WTC11 (cell line): ENCODE measurements at regions of chr20 and their contacts with region 1.

Region 1: GRCh38 chr20:35454881-35455609 is at the start of gene CEP250:
- DNase-seq: peak; percentile 97
- ATAC-seq: peak; percentile 92
- H3K4me3 Mint-ChIP-seq: peak within 1 kb of the TSS; percentile 90
- H3K27ac Mint-ChIP-seq: peak within 1 kb of the TSS; percentile 99
- H3K4me1 Mint-ChIP-seq: peaks cover 32% of the 10 kb centered on the region
- H3K27me3 Mint-ChIP-seq: no peaks in the 10 kb centered on the region
- CTCF ChIP-seq: no peak
- total RNA-seq, gene CEP250: 63.1 to 66.9 TPM (median 65.8 TPM) in 3 replicates

Region 2: DNA sequence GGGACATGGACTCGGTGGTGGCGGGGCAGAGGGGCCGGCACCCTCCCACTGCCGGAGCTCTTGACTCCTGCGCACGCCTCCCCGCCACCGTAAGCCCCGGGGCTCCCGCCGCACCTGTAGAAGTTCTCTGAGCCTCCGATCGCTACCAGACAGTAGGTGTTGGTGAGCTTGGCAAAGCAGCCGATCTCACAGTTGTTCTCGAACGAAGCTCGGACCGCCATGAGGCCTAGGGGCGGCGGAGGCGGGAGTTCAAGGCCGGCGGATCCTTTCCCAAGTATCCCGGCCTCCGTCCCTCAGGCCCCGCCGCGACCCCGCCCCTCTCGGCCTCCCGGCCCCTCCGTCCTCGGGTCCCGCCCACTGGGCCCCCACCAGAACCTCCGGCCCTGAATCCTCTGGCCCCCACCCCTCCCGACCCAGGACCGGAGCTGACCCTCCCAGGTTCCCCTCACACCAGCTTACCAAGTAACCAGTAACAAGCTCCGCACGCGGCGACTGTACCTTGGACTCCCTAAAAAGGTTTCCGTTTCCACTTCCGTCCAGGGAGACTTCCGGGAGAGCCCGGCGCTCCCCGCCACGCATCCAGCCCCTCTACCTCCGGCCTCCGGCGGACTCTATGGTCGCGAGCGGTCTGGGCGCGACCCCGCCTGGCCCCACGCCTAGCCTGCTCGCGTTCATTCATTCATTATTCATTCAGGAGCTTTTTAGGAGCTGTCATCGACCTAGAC is 170.6 kb before region 1 on chr20 and contains the start of gene EIF6:
- CTCF ChIA-PET with region 1: no interaction called
- POLR2A ChIA-PET with region 1: interaction called, 12 read pairs
- DNase-seq: peak; percentile 89
- ATAC-seq: peak; percentile 91
- H3K4me3 Mint-ChIP-seq: peak within 1 kb of the TSS; percentile 94
- H3K27ac Mint-ChIP-seq: peak within 1 kb of the TSS; percentile 84
- H3K4me1 Mint-ChIP-seq: peaks cover 18% of the 10 kb centered on the region
- H3K27me3 Mint-ChIP-seq: no peaks in the 10 kb centered on the region; the same call in 1 of the 2 replicates
- CTCF ChIP-seq: no peak
- total RNA-seq, gene EIF6: 130 to 157 TPM (median 133 TPM) in 3 replicates

Region 3: GRCh38 chr20:35541783-35542588 is 86.9 kb after region 1 on chr20 and contains the start of gene ERGIC3:
- CTCF ChIA-PET with region 1: interaction called, 11 read pairs
- POLR2A ChIA-PET with region 1: interaction called, 10 read pairs
- DNase-seq: peak; percentile 100
- ATAC-seq: peak; percentile 85
- H3K4me3 Mint-ChIP-seq: peak within 1 kb of the TSS; percentile 83
- H3K27ac Mint-ChIP-seq: peak within 1 kb of the TSS; percentile 88
- H3K4me1 Mint-ChIP-seq: peaks cover 16% of the 10 kb centered on the region
- H3K27me3 Mint-ChIP-seq: no peaks in the 10 kb centered on the region; the same call in 1 of the 2 replicates
- CTCF ChIP-seq: no peak
- total RNA-seq, gene ERGIC3: 168 to 181 TPM (median 179 TPM) in 3 replicates